ENCODE measurements at regions of chr2 and their contacts with region 1.

Region 1: DNA sequence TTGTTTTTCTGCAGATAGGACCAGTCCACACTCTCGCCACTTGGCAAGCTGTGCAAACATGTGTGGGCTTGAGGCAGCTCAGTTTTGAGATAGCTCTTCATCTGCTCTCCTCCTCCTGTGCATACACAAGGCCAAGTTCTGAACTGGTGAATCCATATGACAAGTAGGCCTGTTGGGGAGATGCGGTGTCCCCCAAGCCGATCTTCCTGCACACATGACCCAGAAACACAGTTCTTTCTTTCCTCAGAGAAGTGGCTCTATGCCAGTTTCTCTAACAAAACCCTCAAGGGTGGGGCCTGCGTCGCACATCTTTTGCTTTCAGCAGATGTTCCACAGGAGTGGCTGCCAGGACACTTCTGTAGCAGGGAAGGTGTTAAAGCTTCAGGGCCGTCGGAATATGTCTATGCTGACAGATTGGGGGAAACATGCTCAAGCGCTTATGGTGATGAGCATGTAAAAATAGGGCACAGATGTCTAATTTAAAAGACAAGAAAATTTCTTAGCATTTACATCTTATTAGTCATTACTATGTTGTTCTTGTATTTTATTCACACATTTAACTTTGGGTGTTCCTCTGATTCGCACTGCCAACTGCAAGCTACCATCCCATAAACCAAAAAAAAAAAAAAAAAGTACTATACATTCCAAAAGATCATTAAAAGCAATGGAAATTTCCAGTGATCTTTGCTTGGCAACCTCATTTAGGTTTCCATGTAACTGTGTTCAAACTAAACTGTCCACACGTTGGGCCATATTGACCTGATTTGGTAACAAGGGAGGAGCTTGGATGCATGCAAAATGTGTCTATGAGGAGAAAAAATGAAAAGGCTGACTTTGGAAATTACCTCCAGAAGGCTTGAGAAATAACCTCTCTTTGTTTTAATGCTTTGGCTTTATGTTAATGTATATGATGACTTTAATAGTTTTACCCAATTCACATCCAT is 1055.5 kb upstream of the KLHL29 start:
- DNase-seq: no peak
- H3K4me3 ChIP-seq: no peak overlapping the region
- H3K27ac ChIP-seq: no peak overlapping the region
- H3K4me1 ChIP-seq: no peaks in the 10 kb centered on the region
- H3K27me3 ChIP-seq: no peaks in the 10 kb centered on the region
- CTCF ChIP-seq: no peak
- POLR2A ChIP-seq: no peak

Region 2: GRCh38 chr2:21646345-21646744 is 683.1 kb before region 1 on chr2:
- intact Hi-C with region 1: loop called (anchors 5 kb)
- DNase-seq: no peak
- H3K4me3 ChIP-seq: no peak overlapping the region
- H3K27ac ChIP-seq: no peak overlapping the region
- H3K4me1 ChIP-seq: no peaks in the 10 kb centered on the region
- H3K27me3 ChIP-seq: no peaks in the 10 kb centered on the region
- CTCF ChIP-seq: no peak
- POLR2A ChIP-seq: no peak

Region 3: GRCh38 chr2:22397847-22398246 is 68.4 kb after region 1 on chr2:
- intact Hi-C with region 1: loop called (anchors 5 kb)
- DNase-seq: no peak
- H3K4me3 ChIP-seq: no peak overlapping the region
- H3K27ac ChIP-seq: no peak overlapping the region
- H3K4me1 ChIP-seq: no peaks in the 10 kb centered on the region
- H3K27me3 ChIP-seq: no peaks in the 10 kb centered on the region
- CTCF ChIP-seq: no peak
- POLR2A ChIP-seq: no peak

Measured in breast epithelium (tissue), 4 donors.